AG04450 (cell line): ENCODE measurements at regions of chr17 and their contacts with region 1.

Region 1: GRCh38 chr17:29293890-29294579 is at the start of gene NUFIP2:
- DNase-seq: peak; percentile 97
- H3K4me3 ChIP-seq: peak within 1 kb of the TSS; percentile 98
- H3K27ac ChIP-seq: peak within 1 kb of the TSS; percentile 97
- H3K27me3 ChIP-seq: no peaks in the 10 kb centered on the region
- CTCF ChIP-seq: 0 out of 2 replicates have a peak, but pooled peaks have one; percentile 4
- polyA plus RNA-seq, gene NUFIP2: 13.6 and 14.7 TPM in 2 replicates

Region 2: GRCh38 chr17:28973425-28973824 is 320.6 kb before region 1 on chr17:
- CTCF ChIA-PET with region 1: interaction called, 10 read pairs
- POLR2A ChIA-PET with region 1: no interaction called
- DNase-seq: no peak
- H3K4me3 ChIP-seq: no peak overlapping the region
- H3K27ac ChIP-seq: no peak overlapping the region
- H3K27me3 ChIP-seq: peaks cover 73% of the 10 kb centered on the region
- CTCF ChIP-seq: peak; percentile 30; the same call in 1 of the 2 replicates

Region 3: DNA sequence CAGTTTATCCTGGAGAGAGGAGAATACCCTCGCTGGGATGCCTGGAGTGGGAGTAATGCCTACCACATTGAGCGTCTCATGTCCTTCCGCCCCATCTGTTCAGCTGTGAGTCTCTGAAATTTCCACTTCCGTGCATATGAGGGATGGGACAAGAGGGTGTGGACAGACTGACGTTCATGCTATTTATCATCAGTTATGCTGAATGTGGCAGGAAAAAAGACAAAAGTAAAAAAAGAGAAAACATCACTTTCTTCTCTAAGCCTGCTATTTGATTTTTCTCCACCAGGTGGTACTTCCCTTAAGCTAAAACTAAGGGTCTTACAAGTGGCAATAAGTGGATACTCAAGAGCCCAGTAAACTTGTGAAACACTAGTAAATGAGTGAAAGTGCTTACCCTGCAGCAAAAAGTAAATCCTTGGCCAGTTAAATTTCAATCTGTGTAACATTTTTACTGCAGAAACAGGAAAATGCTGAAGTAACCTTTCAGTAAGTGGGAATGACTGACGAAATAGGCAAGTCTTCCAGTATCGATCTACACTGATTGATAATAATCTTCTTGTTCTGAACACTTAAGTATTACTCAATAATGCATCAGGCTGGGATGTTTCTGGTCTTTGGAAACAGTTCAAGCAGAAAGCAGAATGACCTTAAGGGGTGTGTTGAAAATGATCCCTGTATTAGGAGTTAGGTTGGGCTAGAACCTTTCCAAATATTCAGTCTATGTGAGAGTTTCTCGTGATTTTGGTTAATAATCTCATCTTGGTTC is 41.8 kb before region 1 on chr17:
- CTCF ChIA-PET with region 1: interaction called, 20 read pairs
- POLR2A ChIA-PET with region 1: interaction called, 7 read pairs
- DNase-seq: no peak
- H3K4me3 ChIP-seq: no peak overlapping the region
- H3K27ac ChIP-seq: peak overlapping the region; percentile 22
- H3K27me3 ChIP-seq: no peaks in the 10 kb centered on the region
- CTCF ChIP-seq: peak; percentile 56

Region 4: DNA sequence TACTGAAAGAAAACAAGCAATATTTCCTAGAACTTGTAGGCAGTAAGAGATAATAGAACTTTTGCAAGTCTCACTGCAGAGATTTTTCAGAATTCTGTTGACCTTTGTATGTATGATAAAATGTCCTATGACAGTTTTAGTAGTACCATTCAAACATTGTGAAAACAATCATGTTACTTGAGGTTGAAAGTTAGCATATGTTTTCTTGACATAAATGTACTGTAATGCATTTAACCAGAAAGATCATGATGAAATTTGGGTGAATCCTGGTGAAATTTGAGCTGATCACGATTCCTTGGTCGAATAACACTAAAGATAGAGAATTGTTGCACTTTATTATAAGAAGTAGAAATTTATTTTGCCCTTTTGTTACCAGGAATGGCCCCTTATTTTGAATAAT is 181.9 kb after region 1 on chr17:
- CTCF ChIA-PET with region 1: no interaction called
- POLR2A ChIA-PET with region 1: no interaction called
- DNase-seq: no peak
- H3K4me3 ChIP-seq: no peak overlapping the region
- H3K27ac ChIP-seq: no peak overlapping the region
- H3K27me3 ChIP-seq: no peaks in the 10 kb centered on the region
- CTCF ChIP-seq: no peak